ENCODE measurements at regions of chrX and their contacts with region 1.

Region 1: GRCh38 chrX:100884891-100885290 is 10.7 kb upstream of the NOX1 start:
- DNase-seq: no peak
- H3K4me3 ChIP-seq: no peak overlapping the region
- H3K27ac ChIP-seq: no peak overlapping the region
- H3K4me1 ChIP-seq: no peaks in the 10 kb centered on the region
- H3K27me3 ChIP-seq: no peaks in the 10 kb centered on the region
- CTCF ChIP-seq: no peak

Region 2: DNA sequence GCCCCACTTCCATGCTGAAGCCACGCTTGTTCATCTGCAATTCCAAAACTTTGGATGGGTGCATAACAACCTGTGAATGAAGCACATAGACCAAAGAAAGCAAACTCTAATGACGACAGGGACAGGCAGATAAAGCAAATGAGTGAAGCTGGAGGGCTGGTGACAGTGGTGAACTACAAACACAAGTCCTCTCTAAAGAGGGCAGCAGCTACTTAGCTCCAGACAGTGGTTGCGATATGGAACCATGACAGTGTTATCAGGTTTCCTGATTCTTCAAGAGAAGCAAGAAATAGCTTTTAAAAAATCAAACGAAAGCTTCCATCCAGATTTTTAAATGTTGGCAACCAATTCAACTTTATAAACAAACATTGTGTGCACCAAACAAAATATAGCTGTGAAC is 34.6 kb before region 1 on chrX:
- CTCF ChIA-PET with region 1: no interaction called
- POLR2A ChIA-PET with region 1: interaction called, 12 read pairs
- intact Hi-C with region 1: no loop called
- DNase-seq: no peak
- H3K4me3 ChIP-seq: no peak overlapping the region
- H3K27ac ChIP-seq: no peak overlapping the region
- H3K4me1 ChIP-seq: no peaks in the 10 kb centered on the region
- H3K27me3 ChIP-seq: no peaks in the 10 kb centered on the region
- CTCF ChIP-seq: no peak